ENCODE measurements at regions of chr15 and their contacts with region 1.

Region 1: GRCh38 chr15:75453703-75454470 is 2.4 kb upstream of the SIN3A start:
- DNase-seq: peak; percentile 98 to 99
- H3K4me3 ChIP-seq: peak overlapping the region; percentile 78
- H3K4me3 Mint-ChIP-seq: peak overlapping the region; percentile 74
- H3K27ac Mint-ChIP-seq: peak overlapping the region; percentile 89
- H3K4me1 ChIP-seq: peaks cover 23% of the 10 kb centered on the region; the same call in 1 of the 2 replicates
- H3K4me1 Mint-ChIP-seq: peaks cover 14% of the 10 kb centered on the region
- H3K27me3 ChIP-seq: no peaks in the 10 kb centered on the region
- H3K27me3 Mint-ChIP-seq: no peaks in the 10 kb centered on the region
- CTCF ChIP-seq: no peak

Region 2: GRCh38 chr15:74695597-74696397 is 758.1 kb before region 1 on chr15 and contains the start of gene EDC3:
- CTCF ChIA-PET with region 1: no interaction called
- POLR2A ChIA-PET with region 1: interaction called, 14 read pairs
- intact Hi-C with region 1: no loop called
- DNase-seq: peak; percentile 84 to 87
- H3K4me3 ChIP-seq: peak within 1 kb of the TSS; percentile 87
- H3K4me3 Mint-ChIP-seq: peak within 1 kb of the TSS; percentile 97
- H3K27ac Mint-ChIP-seq: peak within 1 kb of the TSS; percentile 99
- H3K4me1 ChIP-seq: no peaks in the 10 kb centered on the region; the same call in 1 of the 2 replicates
- H3K4me1 Mint-ChIP-seq: peaks cover 13% of the 10 kb centered on the region
- H3K27me3 ChIP-seq: no peaks in the 10 kb centered on the region
- H3K27me3 Mint-ChIP-seq: no peaks in the 10 kb centered on the region
- CTCF ChIP-seq: no peak
- total RNA-seq, gene EDC3: 50.9 and 62.0 TPM in 2 replicates

Region 3: DNA sequence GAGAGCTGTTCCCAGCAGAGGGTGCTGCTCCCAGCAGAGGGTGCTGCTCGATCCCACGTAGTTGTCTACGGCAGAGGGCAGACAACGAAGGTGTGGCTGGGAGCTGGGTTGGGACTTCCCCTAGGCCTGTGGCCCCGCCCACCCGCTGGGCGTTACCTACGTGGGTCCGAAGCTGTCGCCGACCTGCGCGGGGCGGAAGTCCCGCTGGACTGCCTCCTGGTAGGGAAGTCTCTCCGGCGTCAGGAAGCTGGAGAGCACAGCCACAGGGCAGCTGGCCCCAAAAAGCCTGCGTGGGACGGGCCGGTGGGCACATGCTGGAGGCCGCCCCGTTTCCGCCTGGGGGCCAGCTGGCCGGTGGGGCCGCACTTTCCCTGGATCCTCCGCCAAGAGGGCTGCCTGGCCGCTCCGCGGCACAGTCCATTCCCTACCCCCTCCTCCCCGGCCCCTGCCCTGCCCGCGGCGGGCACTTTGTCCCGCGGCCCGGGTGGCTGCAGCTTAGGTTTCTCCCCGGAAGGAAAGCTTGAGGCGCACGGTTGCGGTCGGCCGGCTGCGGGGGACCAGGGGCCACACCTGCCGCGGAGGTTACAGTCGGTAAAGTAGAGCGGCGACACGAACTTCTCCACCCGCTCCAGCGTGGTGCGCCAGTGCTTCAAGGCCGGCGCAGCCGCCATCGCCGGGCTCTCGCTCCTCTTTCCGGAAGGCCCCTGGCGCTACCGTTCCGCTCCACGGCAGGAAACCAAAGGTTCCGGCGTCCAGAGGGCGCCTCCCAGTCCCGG is 85.8 kb before region 1 on chr15 and contains the start of gene MAN2C1:
- CTCF ChIA-PET with region 1: interaction called, 33 read pairs
- POLR2A ChIA-PET with region 1: interaction called, 54 read pairs
- intact Hi-C with region 1: loop called (anchors 1 kb)
- DNase-seq: peak; percentile 98
- H3K4me3 ChIP-seq: peak within 1 kb of the TSS; percentile 61
- H3K4me3 Mint-ChIP-seq: peak within 1 kb of the TSS; percentile 93
- H3K27ac Mint-ChIP-seq: peak within 1 kb of the TSS; percentile 93
- H3K4me1 ChIP-seq: peaks cover 19% of the 10 kb centered on the region
- H3K4me1 Mint-ChIP-seq: peaks cover 13% of the 10 kb centered on the region
- H3K27me3 ChIP-seq: no peaks in the 10 kb centered on the region
- H3K27me3 Mint-ChIP-seq: no peaks in the 10 kb centered on the region
- CTCF ChIP-seq: peak; percentile 53 to 92
- total RNA-seq, gene MAN2C1: 131 and 140 TPM in 2 replicates

Region 4: GRCh38 chr15:75554717-75555116 is 100.8 kb after region 1 on chr15:
- CTCF ChIA-PET with region 1: interaction called, 11 read pairs
- POLR2A ChIA-PET with region 1: no interaction called
- intact Hi-C with region 1: no loop called
- DNase-seq: no peak
- H3K4me3 ChIP-seq: no peak overlapping the region
- H3K4me3 Mint-ChIP-seq: no peak overlapping the region
- H3K27ac Mint-ChIP-seq: no peak overlapping the region
- H3K4me1 ChIP-seq: no peaks in the 10 kb centered on the region; the same call in 1 of the 2 replicates
- H3K4me1 Mint-ChIP-seq: no peaks in the 10 kb centered on the region
- H3K27me3 ChIP-seq: no peaks in the 10 kb centered on the region
- H3K27me3 Mint-ChIP-seq: no peaks in the 10 kb centered on the region
- CTCF ChIP-seq: no peak

Region 5: DNA sequence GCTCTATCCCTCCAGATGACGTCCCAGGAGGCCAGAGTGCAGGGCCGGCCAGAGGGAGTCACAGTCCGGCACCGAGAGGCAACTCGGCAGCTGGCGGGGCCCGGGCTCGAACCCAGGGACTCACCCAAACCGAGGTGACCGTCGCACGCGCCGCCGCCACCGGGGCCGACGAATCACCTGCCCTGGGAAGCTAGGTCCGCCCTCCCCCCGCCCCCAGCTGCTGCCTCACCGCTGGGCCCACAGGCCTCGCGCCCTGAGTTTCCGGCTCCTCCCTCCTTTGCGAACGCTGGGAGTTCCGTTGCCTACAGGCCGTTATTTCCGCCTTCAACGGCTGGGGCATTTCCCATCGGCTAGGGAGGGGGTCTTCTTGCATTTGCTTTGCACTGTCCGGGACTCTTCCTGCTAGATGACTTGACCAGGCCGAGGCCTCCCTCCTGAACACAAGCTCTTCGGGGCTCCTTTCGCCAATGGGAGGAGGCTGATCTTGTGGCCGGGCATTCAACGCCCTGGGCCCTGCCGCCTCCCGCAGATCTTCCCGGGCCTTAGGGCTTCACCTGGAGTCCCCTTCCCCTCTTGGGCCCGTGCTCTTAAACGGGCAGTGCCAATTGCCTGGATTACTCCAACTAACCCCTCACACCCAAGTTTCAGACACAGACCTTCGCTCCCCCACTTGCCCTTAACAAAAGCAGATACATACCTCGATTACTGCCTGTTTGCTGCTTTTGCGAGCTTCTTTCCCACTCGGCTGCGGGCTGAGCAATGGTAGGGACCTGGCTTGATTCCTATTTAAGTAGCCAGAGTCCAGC is 171.9 kb after region 1 on chr15 and contains the start of gene SNUPN:
- CTCF ChIA-PET with region 1: no interaction called
- POLR2A ChIA-PET with region 1: interaction called, 14 read pairs
- intact Hi-C with region 1: no loop called
- DNase-seq: peak; percentile 84 to 88
- H3K4me3 ChIP-seq: peak within 1 kb of the TSS; percentile 85
- H3K4me3 Mint-ChIP-seq: peak within 1 kb of the TSS; percentile 79
- H3K27ac Mint-ChIP-seq: peak within 1 kb of the TSS; percentile 68
- H3K4me1 ChIP-seq: 0 out of 2 replicates have a peak, but pooled peaks cover 7% of the 10 kb centered on the region
- H3K4me1 Mint-ChIP-seq: no peaks in the 10 kb centered on the region
- H3K27me3 ChIP-seq: no peaks in the 10 kb centered on the region
- H3K27me3 Mint-ChIP-seq: no peaks in the 10 kb centered on the region
- CTCF ChIP-seq: no peak
- total RNA-seq, gene SNUPN: 10.6 and 12.5 TPM in 2 replicates

Region 6: DNA sequence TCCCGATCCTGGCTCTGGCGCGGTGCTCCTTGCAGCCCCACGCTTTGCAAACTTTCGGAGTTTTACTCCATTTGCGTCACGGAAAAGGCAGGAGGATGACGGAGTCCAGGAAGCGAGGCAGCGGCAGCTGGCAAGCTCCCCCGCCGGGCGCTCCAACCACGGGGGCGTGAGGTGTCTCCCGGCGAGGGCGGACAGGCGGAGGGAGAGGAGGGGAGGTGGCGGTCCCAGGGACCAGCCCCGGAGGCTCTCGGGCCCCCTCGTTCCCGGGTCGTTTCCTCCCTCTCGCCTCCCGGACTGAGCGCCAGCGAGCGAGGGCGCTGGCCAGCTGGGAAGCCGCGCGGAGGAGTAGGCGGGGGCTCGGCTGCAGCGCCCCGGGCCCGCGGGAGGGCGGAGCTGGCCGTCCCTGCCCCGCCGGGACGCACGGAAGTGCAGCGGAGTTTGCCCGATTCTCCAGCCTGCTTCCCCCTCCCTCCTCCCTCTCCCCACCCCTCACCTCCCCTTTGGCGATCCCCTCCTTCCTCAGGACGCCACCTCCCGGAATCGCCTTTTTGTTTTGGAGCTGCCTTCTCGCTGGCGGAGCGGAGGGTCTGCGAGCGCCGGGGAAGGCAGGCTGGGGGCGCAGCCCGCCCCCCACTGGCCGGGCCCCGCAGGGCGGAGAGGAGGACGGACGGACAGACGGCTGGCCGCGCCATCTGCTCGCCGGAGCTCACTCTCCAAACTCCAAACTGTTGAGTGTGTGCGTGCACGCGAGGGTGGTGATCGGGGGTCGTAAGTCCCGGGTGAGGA is 193.7 kb after region 1 on chr15 and contains the start of gene SNX33:
- CTCF ChIA-PET with region 1: interaction called, 4 read pairs
- POLR2A ChIA-PET with region 1: interaction called, 13 read pairs
- intact Hi-C with region 1: no loop called
- DNase-seq: peak; percentile 88
- H3K4me3 ChIP-seq: peak within 1 kb of the TSS; percentile 66
- H3K4me3 Mint-ChIP-seq: peak within 1 kb of the TSS; percentile 75
- H3K27ac Mint-ChIP-seq: peak within 1 kb of the TSS; percentile 89
- H3K4me1 ChIP-seq: peaks cover 45% of the 10 kb centered on the region
- H3K4me1 Mint-ChIP-seq: peaks cover 24% of the 10 kb centered on the region
- H3K27me3 ChIP-seq: no peaks in the 10 kb centered on the region
- H3K27me3 Mint-ChIP-seq: no peaks in the 10 kb centered on the region
- CTCF ChIP-seq: peak in 1 of 2 experiments; percentile 51
- total RNA-seq, gene SNX33: 17.9 and 19.4 TPM in 2 replicates